ENCODE measurements at regions of chr11 and their contacts with region 1.

Region 1: GRCh38 chr11:45252134-45252855 is 33.8 kb downstream of the SYT13 start:
- DNase-seq: peak; percentile 91
- ATAC-seq: peak; percentile 99
- H3K4me3 Mint-ChIP-seq: no peak overlapping the region
- H3K27ac Mint-ChIP-seq: no peak overlapping the region
- H3K4me1 Mint-ChIP-seq: 0 out of 2 replicates have a peak, but pooled peaks cover 3% of the 10 kb centered on the region
- H3K27me3 Mint-ChIP-seq: no peaks in the 10 kb centered on the region; the same call in 1 of the 2 replicates
- CTCF ChIP-seq: peak; percentile 93

Region 2: GRCh38 chr11:45209891-45210699 is 42.2 kb before region 1 on chr11:
- CTCF ChIA-PET with region 1: interaction called, 15 read pairs
- POLR2A ChIA-PET with region 1: no interaction called
- DNase-seq: peak; percentile 72
- ATAC-seq: peak; percentile 76
- H3K4me3 Mint-ChIP-seq: no peak overlapping the region; the same call in 1 of the 2 replicates
- H3K27ac Mint-ChIP-seq: peak overlapping the region; percentile 73; the same call in 1 of the 2 replicates
- H3K4me1 Mint-ChIP-seq: peaks cover 21% of the 10 kb centered on the region
- H3K27me3 Mint-ChIP-seq: no peaks in the 10 kb centered on the region
- CTCF ChIP-seq: no peak

Region 3: GRCh38 chr11:45238724-45239123 is 13.6 kb before region 1 on chr11:
- CTCF ChIA-PET with region 1: interaction called, 41 read pairs
- POLR2A ChIA-PET with region 1: no interaction called
- DNase-seq: no peak
- ATAC-seq: no peak
- H3K4me3 Mint-ChIP-seq: no peak overlapping the region
- H3K27ac Mint-ChIP-seq: no peak overlapping the region
- H3K4me1 Mint-ChIP-seq: 0 out of 2 replicates have a peak, but pooled peaks cover 3% of the 10 kb centered on the region
- H3K27me3 Mint-ChIP-seq: peaks cover 12% of the 10 kb centered on the region
- CTCF ChIP-seq: no peak

Region 4: GRCh38 chr11:45285930-45286632 is 33.8 kb after region 1 on chr11 and contains the start of gene SYT13:
- CTCF ChIA-PET with region 1: interaction called, 58 read pairs
- POLR2A ChIA-PET with region 1: no interaction called
- DNase-seq: peak; percentile 89
- ATAC-seq: peak; percentile 92
- H3K4me3 Mint-ChIP-seq: peak within 1 kb of the TSS; percentile 72
- H3K27ac Mint-ChIP-seq: 0 out of 2 replicates have a peak within 1 kb of the TSS, but pooled peaks have one; percentile 3
- H3K4me1 Mint-ChIP-seq: peaks cover 20% of the 10 kb centered on the region
- H3K27me3 Mint-ChIP-seq: peaks cover 75% of the 10 kb centered on the region
- CTCF ChIP-seq: no peak
- total RNA-seq, gene SYT13: 10.8 to 15.1 TPM (median 12.0 TPM) in 3 replicates

Region 5: GRCh38 chr11:45332276-45332934 is 80.1 kb after region 1 on chr11:
- CTCF ChIA-PET with region 1: interaction called, 20 read pairs
- POLR2A ChIA-PET with region 1: no interaction called
- DNase-seq: peak; percentile 53
- ATAC-seq: peak; percentile 66
- H3K4me3 Mint-ChIP-seq: no peak overlapping the region
- H3K27ac Mint-ChIP-seq: no peak overlapping the region
- H3K4me1 Mint-ChIP-seq: peaks cover 7% of the 10 kb centered on the region
- H3K27me3 Mint-ChIP-seq: peaks cover 34% of the 10 kb centered on the region
- CTCF ChIP-seq: peak; percentile 93

Region 6: GRCh38 chr11:45383224-45383623 is 130.9 kb after region 1 on chr11:
- CTCF ChIA-PET with region 1: no interaction called
- POLR2A ChIA-PET with region 1: no interaction called
- DNase-seq: no peak
- ATAC-seq: no peak
- H3K4me3 Mint-ChIP-seq: no peak overlapping the region
- H3K27ac Mint-ChIP-seq: no peak overlapping the region
- H3K4me1 Mint-ChIP-seq: peaks cover 12% of the 10 kb centered on the region
- H3K27me3 Mint-ChIP-seq: peaks cover 7% of the 10 kb centered on the region
- CTCF ChIP-seq: no peak